CD8-positive, alpha-beta memory T cell (primary cell): ENCODE measurements at regions of chr10 and their contacts with region 1.

Region 1: GRCh38 chr10:110893559-110894179 is 21.9 kb downstream of the PDCD4 start:
- DNase-seq: peak in 2 of 5 donors; percentile 55 to 62
- H3K4me3 ChIP-seq: no peak overlapping the region
- H3K4me3 Mint-ChIP-seq: peak overlapping the region in 2 of 7 donors; percentile 0 to 3
- H3K27ac ChIP-seq: no peak overlapping the region
- H3K27ac Mint-ChIP-seq: peak overlapping the region in 6 of 8 donors; percentile 3 to 66 (median 38)
- H3K4me1 ChIP-seq: peaks cover 10% of the 10 kb centered on the region
- H3K4me1 Mint-ChIP-seq: peaks cover 60 to 84% (median 71%) of the 10 kb centered on the region in 3 donors
- H3K27me3 ChIP-seq: no peaks in the 10 kb centered on the region
- H3K27me3 Mint-ChIP-seq: no peaks in the 10 kb centered on the region

Region 2: GRCh38 chr10:110746254-110746826 is 147.3 kb before region 1 on chr10:
- CTCF ChIA-PET with region 1: interaction called, 19 read pairs
- POLR2A ChIA-PET with region 1: no interaction called
- DNase-seq: peak; percentile 24 to 64 (median 38)
- H3K4me3 ChIP-seq: no peak overlapping the region
- H3K4me3 Mint-ChIP-seq: peak overlapping the region in 1 of 7 donors; percentile 70
- H3K27ac ChIP-seq: no peak overlapping the region
- H3K27ac Mint-ChIP-seq: peak overlapping the region in 1 of 8 donors; percentile 35
- H3K4me1 ChIP-seq: peaks cover 55% of the 10 kb centered on the region
- H3K4me1 Mint-ChIP-seq: peaks cover 25 to 49% (median 44%) of the 10 kb centered on the region in 3 donors
- H3K27me3 ChIP-seq: no peaks in the 10 kb centered on the region
- H3K27me3 Mint-ChIP-seq: no peaks in the 10 kb centered on the region

Region 3: GRCh38 chr10:110918643-110919363 is 25.1 kb after region 1 on chr10 and contains the start of gene BBIP1:
- CTCF ChIA-PET with region 1: interaction called, 14 read pairs
- POLR2A ChIA-PET with region 1: interaction called, 5 read pairs
- DNase-seq: peak in 2 of 5 donors; percentile 96 to 98
- H3K4me3 ChIP-seq: peak within 1 kb of the TSS; percentile 82
- H3K4me3 Mint-ChIP-seq: peak within 1 kb of the TSS; percentile 92 to 99 (median 97)
- H3K27ac ChIP-seq: peak within 1 kb of the TSS; percentile 96
- H3K27ac Mint-ChIP-seq: peak within 1 kb of the TSS; percentile 99 to 100 (median 100)
- H3K4me1 ChIP-seq: peaks cover 10% of the 10 kb centered on the region
- H3K4me1 Mint-ChIP-seq: peaks cover 42 to 70% (median 60%) of the 10 kb centered on the region in 3 donors
- H3K27me3 ChIP-seq: no peaks in the 10 kb centered on the region
- H3K27me3 Mint-ChIP-seq: no peaks in the 10 kb centered on the region
- total RNA-seq, gene BBIP1: 36.4 to 41.1 TPM